BJ (cell line): ENCODE measurements at regions of chr3 and their contacts with region 1.

Region 1: GRCh38 chr3:55485211-55485791 is 1.8 kb downstream of the WNT5A start:
- DNase-seq: no peak
- H3K4me3 ChIP-seq: peak overlapping the region; percentile 68
- H3K27me3 ChIP-seq: no peaks in the 10 kb centered on the region
- CTCF ChIP-seq: peak; percentile 85

Region 2: DNA sequence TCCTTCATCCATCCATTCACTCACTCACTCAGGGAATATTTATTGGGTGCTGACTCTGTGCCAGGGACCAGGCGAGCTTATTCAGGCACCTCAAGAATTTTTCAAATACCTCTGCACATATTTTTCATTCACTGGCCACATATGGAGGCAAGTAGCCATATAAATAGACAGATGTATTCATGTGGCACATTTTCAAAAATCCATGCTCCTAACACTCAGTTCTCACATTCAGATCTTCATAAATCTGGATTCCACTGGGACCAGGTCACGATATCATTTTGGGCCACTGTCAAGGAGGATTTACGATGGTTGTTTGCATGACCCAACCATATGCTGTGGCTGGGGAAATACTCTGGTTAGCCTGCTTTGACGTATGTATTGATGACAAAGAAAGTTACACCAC is 315.7 kb before region 1 on chr3:
- CTCF ChIA-PET with region 1: interaction called, 15 read pairs
- POLR2A ChIA-PET with region 1: interaction called, 20 read pairs
- DNase-seq: peak; percentile 100
- H3K4me3 ChIP-seq: no peak overlapping the region
- H3K27me3 ChIP-seq: no peaks in the 10 kb centered on the region
- CTCF ChIP-seq: no peak

Region 3: GRCh38 chr3:55471084-55471483 is 14.2 kb before region 1 on chr3:
- CTCF ChIA-PET with region 1: no interaction called
- POLR2A ChIA-PET with region 1: interaction called, 11 read pairs
- DNase-seq: no peak
- H3K4me3 ChIP-seq: no peak overlapping the region
- H3K27me3 ChIP-seq: no peaks in the 10 kb centered on the region
- CTCF ChIP-seq: no peak

Region 4: GRCh38 chr3:55601366-55602080 is 116.2 kb after region 1 on chr3:
- CTCF ChIA-PET with region 1: no interaction called
- POLR2A ChIA-PET with region 1: interaction called, 11 read pairs
- DNase-seq: no peak
- H3K4me3 ChIP-seq: no peak overlapping the region
- H3K27me3 ChIP-seq: peaks cover 6% of the 10 kb centered on the region; the same call in 1 of the 2 replicates
- CTCF ChIP-seq: no peak

Region 5: GRCh38 chr3:55721716-55722484 is 236.6 kb after region 1 on chr3:
- CTCF ChIA-PET with region 1: interaction called, 36 read pairs
- POLR2A ChIA-PET with region 1: interaction called, 6 read pairs
- DNase-seq: no peak
- H3K4me3 ChIP-seq: no peak overlapping the region
- H3K27me3 ChIP-seq: no peaks in the 10 kb centered on the region
- CTCF ChIP-seq: peak; percentile 80

Region 6: GRCh38 chr3:55755516-55756205 is 270.4 kb after region 1 on chr3:
- CTCF ChIA-PET with region 1: no interaction called
- POLR2A ChIA-PET with region 1: interaction called, 10 read pairs
- DNase-seq: no peak
- H3K4me3 ChIP-seq: no peak overlapping the region
- H3K27me3 ChIP-seq: 0 out of 2 replicates have a peak, but pooled peaks cover 1% of the 10 kb centered on the region
- CTCF ChIP-seq: no peak